ENCODE measurements at regions of chr10 and their contacts with region 1.

Region 1: GRCh38 chr10:110820321-110820814 is 51.4 kb upstream of the PDCD4 start:
- DNase-seq: no peak
- H3K4me3 ChIP-seq: no peak overlapping the region
- H3K27ac ChIP-seq: peak overlapping the region; percentile 87
- H3K4me1 ChIP-seq: peaks cover 76% of the 10 kb centered on the region
- H3K27me3 ChIP-seq: no peaks in the 10 kb centered on the region
- CTCF ChIP-seq: no peak
- POLR2A ChIP-seq: no peak

Region 2: DNA sequence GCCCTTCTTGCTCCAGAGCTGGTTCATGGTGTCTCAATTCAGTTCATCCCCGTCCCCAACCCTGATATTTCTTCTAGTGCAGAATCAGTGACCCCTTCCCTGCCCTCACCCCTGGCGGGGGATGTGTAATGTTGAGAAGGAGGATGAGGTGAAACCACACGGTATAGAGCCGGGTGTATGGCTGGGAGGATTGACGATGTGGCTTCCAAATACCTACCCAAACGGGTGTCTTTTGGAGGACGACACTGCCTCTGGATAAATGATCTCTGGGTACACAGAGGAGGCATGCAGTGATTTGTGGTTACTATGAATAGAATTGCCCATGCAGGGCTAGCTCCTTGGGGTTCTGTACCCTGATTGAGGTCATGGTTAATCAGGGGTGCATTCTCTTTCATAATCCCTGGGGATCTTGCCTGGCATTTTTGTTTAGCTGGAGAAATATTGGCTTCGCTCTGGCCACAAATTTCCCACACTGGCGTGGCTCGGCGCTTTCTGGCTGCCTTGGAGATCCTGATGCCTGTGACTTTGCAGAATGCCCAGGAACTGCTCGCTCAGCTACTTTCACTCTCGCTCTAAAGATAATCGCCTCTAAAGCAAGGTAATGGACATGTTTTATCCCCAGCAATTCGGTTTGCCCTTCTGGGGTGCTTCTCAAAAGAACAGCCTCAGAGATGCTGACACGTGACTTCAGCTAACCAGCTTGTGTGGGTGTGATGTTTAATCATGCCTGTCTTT is 87.0 kb before region 1 on chr10:
- intact Hi-C with region 1: no loop called
- DNase-seq: no peak
- H3K4me3 ChIP-seq: no peak overlapping the region
- H3K27ac ChIP-seq: no peak overlapping the region
- H3K4me1 ChIP-seq: no peaks in the 10 kb centered on the region
- H3K27me3 ChIP-seq: no peaks in the 10 kb centered on the region
- CTCF ChIP-seq: no peak
- POLR2A ChIP-seq: no peak

Region 3: DNA sequence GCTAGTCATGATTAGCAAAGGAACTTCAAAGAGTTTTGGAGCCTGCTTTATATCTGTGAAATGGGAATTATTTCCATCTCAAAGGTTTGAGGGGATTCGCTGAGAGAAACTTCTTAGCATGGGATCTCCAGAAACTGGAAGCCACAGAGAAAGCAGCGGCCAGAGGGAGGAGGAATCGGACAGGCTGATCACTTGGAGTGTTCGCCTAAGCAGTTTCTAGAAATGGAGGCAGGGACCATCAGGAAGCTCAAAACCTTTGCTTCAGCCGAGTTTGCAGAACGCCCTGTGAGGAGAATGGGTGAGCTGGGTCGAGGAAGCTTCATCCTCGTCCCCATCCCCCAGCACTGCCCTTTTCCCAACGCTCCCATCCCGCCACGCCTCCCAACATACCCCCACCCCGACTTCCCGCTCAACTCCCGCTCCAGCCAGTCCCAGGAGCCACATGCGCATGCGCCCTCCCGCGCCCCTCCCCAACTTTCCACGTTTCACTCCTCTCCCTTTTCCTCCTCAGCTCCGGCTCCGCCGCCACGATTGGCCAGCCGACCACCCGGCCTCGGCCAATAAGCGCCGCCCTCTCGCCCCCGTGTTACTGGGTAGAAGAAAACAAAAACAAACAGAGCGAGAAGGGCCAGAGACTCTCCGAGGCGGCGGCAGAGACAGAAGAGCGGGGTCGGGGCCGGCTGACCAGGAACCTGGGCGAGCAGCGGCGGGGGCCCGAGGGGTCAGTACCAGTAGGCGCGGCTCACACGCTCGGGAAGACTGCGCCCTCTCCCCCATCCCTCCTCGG is 51.1 kb after region 1 on chr10 and contains the start of gene PDCD4:
- intact Hi-C with region 1: loop called (anchors 10 kb)
- DNase-seq: peak in 1 of 2 donors; percentile 99
- H3K4me3 ChIP-seq: peak within 1 kb of the TSS; percentile 75 to 95
- H3K27ac ChIP-seq: peak within 1 kb of the TSS; percentile 100
- H3K4me1 ChIP-seq: peaks cover 60% of the 10 kb centered on the region
- H3K27me3 ChIP-seq: no peaks in the 10 kb centered on the region
- CTCF ChIP-seq: no peak
- POLR2A ChIP-seq: peak; percentile 5 to 82
- total RNA-seq, gene PDCD4: 110 TPM

Measured in vagina (tissue), 2 donors.